PC-9 (cell line): ENCODE measurements at regions of chrX and their contacts with region 1.

Region 1: DNA sequence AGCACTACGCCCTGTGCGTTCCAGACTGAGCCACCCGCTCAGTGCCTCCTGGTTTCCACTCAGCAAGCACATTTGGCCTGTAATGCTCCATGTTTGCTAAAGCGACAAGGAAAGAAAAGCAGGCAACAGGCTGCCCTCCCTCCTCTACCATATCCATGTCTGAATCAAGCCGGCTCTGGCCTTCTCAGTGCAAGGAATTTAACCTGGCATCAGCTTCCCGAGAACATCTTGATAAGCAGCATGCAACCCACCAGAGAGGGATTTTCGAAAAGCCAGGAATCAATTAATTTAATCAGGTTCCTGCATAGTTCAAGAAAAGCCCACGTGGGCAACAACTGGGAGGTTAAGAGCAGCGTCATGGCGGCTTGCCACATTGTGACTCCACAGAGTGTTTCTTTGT is 228.2 kb downstream of the HS6ST2 start:
- DNase-seq: no peak
- H3K4me3 ChIP-seq: no peak overlapping the region
- H3K27ac ChIP-seq: no peak overlapping the region
- H3K4me1 ChIP-seq: no peaks in the 10 kb centered on the region
- H3K27me3 ChIP-seq: no peaks in the 10 kb centered on the region
- CTCF ChIP-seq: no peak

Region 2: GRCh38 chrX:132716006-132716405 is 14.3 kb before region 1 on chrX:
- CTCF ChIA-PET with region 1: no interaction called
- POLR2A ChIA-PET with region 1: no interaction called
- intact Hi-C with region 1: no loop called
- DNase-seq: no peak
- H3K4me3 ChIP-seq: no peak overlapping the region
- H3K27ac ChIP-seq: no peak overlapping the region
- H3K4me1 ChIP-seq: no peaks in the 10 kb centered on the region
- H3K27me3 ChIP-seq: no peaks in the 10 kb centered on the region
- CTCF ChIP-seq: peak; percentile 40; the same call in 1 of the 2 replicates

Region 3: DNA sequence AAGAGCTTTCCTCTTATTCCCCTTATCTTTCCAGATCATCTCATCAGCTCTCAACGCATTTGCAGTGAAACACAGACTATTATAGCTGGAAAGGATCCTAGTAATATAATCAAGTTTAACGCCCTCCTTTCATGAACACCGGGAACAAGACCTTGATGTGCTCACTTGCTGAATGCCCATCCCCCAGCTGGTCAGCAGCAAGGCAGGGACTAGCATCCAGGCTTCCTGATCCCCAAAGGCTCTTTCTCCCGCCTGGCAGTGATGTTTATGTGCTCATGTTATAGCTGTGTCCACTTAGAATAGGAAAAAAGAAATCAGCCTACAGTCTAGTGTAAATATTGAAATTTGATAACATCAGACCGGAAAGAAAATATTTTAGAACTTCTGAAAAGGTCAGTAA is 660.4 kb after region 1 on chrX:
- CTCF ChIA-PET with region 1: interaction called, 16 read pairs
- POLR2A ChIA-PET with region 1: no interaction called
- intact Hi-C with region 1: no loop called
- DNase-seq: no peak
- H3K4me3 ChIP-seq: no peak overlapping the region
- H3K27ac ChIP-seq: no peak overlapping the region
- H3K4me1 ChIP-seq: peaks cover 7% of the 10 kb centered on the region
- H3K27me3 ChIP-seq: no peaks in the 10 kb centered on the region
- CTCF ChIP-seq: no peak

Region 4: DNA sequence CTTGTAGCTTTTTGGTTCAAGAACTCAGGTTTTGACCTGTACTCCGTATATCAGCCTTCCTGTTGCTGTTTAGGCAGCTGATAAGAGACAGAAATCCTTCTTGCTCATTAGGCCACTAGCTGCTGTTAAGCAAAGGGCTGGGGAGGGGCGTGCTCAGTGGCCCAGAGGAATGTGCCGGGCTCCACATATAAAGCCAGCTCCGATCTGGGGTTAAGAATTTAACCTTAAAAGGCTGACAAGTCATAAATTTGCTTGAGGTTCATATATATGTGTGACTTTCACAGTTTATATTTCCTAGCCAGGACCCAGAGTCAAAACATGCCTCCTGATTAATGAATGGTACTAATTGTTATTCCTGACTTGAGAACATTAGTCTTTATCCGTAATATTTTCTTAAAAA is 1239.8 kb after region 1 on chrX:
- CTCF ChIA-PET with region 1: no interaction called
- POLR2A ChIA-PET with region 1: no interaction called
- intact Hi-C with region 1: no loop called
- DNase-seq: no peak
- H3K4me3 ChIP-seq: no peak overlapping the region
- H3K27ac ChIP-seq: no peak overlapping the region
- H3K4me1 ChIP-seq: no peaks in the 10 kb centered on the region
- H3K27me3 ChIP-seq: 0 out of 2 replicates have a peak, but pooled peaks cover 4% of the 10 kb centered on the region
- CTCF ChIP-seq: no peak